ENCODE measurements at regions of chrX and their contacts with region 1.

Region 1: DNA sequence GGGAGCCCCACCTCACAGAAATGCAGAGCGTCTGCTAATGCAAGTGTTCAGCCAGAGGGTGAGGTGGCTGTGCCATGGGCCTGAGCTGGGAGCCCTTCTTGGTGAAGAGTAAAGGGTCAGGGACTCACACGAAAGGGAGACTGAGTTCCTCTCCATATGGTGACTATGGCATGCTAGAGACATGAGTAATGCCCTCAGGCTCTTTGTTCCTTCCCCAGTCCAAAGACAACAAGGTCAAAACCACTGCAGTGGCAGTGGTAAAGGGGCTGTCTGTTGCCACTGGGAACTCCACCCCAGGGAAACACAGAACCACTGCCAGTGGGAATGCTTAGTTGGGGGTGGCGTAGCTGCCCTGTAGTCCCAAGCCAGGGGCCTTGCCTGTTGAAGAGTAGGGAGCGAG is 22.4 kb downstream of the RAB40AL start:
- DNase-seq: peak; percentile 65
- H3K4me3 ChIP-seq: no peak overlapping the region
- H3K27ac ChIP-seq: no peak overlapping the region
- H3K4me1 ChIP-seq: peaks cover 6% of the 10 kb centered on the region
- H3K27me3 ChIP-seq: peaks cover 2% of the 10 kb centered on the region
- CTCF ChIP-seq: no peak

Region 2: GRCh38 chrX:102515975-102516941 is 443.2 kb before region 1 on chrX and contains the start of gene TMSB15A:
- CTCF ChIA-PET with region 1: no interaction called
- dilution Hi-C with region 1: no loop called
- in situ Hi-C with region 1: no loop called
- intact Hi-C with region 1: no loop called
- DNase-seq: peak; percentile 28
- H3K4me3 ChIP-seq: peak within 1 kb of the TSS in 2 of 3 experiments; percentile 39 to 46
- H3K27ac ChIP-seq: no peak within 1 kb of the TSS
- H3K4me1 ChIP-seq: peaks cover 4% of the 10 kb centered on the region
- H3K27me3 ChIP-seq: no peaks in the 10 kb centered on the region
- CTCF ChIP-seq: no peak
- total RNA-seq, gene TMSB15A: 1.4 TPM in 1 of 2 donors, not detected in the other

Region 3: DNA sequence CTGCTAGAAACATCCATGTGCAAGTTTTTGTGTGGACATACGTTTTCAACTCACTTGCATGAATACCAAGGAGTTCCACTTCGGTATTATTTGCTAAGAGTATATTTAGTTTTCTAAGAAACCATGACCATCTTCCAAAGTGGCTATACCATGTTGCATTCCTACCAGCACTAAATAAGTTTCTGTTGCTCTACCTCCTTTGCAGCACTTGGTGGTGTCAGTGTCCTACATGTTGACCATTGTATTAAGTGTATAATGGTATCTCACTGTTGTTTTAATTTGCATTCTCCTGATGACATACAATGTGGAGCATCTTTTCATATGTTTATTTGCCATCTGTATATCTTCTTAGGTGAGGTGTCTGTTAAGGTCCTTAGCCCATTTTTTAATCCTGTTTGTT is 316.2 kb before region 1 on chrX:
- CTCF ChIA-PET with region 1: no interaction called
- dilution Hi-C with region 1: no loop called
- in situ Hi-C with region 1: no loop called
- intact Hi-C with region 1: no loop called
- DNase-seq: no peak
- H3K4me3 ChIP-seq: no peak overlapping the region
- H3K27ac ChIP-seq: no peak overlapping the region
- H3K4me1 ChIP-seq: no peaks in the 10 kb centered on the region
- H3K27me3 ChIP-seq: no peaks in the 10 kb centered on the region
- CTCF ChIP-seq: no peak

Region 4: DNA sequence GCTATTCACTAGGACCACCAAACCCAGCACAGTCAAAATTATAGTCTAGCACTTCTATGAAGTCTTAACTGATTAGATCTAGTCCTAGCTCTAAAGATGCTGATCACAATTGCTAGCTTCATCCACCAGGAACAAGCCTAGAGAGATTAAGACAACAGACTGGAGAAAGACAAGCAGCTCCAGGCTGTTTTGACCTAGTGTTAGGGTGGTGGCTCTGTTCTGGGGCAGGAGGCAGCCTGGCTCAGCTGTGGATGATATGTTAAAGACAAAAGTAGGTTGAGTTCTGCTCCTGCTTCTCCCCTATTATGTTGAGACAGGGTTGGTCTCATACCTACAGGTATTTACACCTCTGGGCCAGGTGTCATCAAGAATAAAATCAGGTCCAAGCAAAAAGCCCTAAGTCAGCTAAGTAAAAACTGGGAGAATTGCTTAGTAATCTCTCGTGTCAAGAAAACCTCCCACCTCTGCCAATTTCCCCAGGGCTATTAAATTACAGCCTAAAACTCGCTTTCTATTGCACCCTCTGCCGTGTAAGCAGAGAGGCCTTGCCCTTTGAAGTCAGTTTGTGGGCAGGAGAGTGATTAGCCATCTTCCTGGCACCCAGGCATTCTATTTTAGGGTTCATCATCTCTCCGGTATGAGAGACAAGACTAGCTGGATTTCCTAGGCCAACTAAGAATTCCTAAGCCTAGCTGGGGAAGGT is 17.5 kb after region 1 on chrX:
- CTCF ChIA-PET with region 1: no interaction called
- dilution Hi-C with region 1: no loop called
- in situ Hi-C with region 1: no loop called
- intact Hi-C with region 1: loop called (anchors 2 kb)
- DNase-seq: peak; percentile 87
- H3K4me3 ChIP-seq: no peak overlapping the region
- H3K27ac ChIP-seq: peak overlapping the region; percentile 54
- H3K4me1 ChIP-seq: peaks cover 35% of the 10 kb centered on the region
- H3K27me3 ChIP-seq: no peaks in the 10 kb centered on the region
- CTCF ChIP-seq: no peak

Region 5: GRCh38 chrX:103157496-103158320 is 198.2 kb after region 1 on chrX:
- CTCF ChIA-PET with region 1: no interaction called
- dilution Hi-C with region 1: no loop called
- in situ Hi-C with region 1: no loop called
- intact Hi-C with region 1: loop called (anchors 2 kb)
- DNase-seq: peak; percentile 22
- H3K4me3 ChIP-seq: no peak overlapping the region
- H3K27ac ChIP-seq: no peak overlapping the region
- H3K4me1 ChIP-seq: peaks cover 13% of the 10 kb centered on the region
- H3K27me3 ChIP-seq: no peaks in the 10 kb centered on the region
- CTCF ChIP-seq: peak; percentile 71 to 82

Region 6: GRCh38 chrX:103215425-103215991 is 256.0 kb after region 1 on chrX:
- CTCF ChIA-PET with region 1: no interaction called
- dilution Hi-C with region 1: no loop called
- in situ Hi-C with region 1: no loop called
- intact Hi-C with region 1: no loop called
- DNase-seq: no peak
- H3K4me3 ChIP-seq: peak overlapping the region; percentile 55 to 63 (median 56)
- H3K27ac ChIP-seq: peak overlapping the region; percentile 11
- H3K4me1 ChIP-seq: no peaks in the 10 kb centered on the region
- H3K27me3 ChIP-seq: peaks cover 3% of the 10 kb centered on the region
- CTCF ChIP-seq: no peak

Measured in mammary epithelial cell (primary cell).